ENCODE measurements at regions of chr7 and their contacts with region 1.

Region 1: DNA sequence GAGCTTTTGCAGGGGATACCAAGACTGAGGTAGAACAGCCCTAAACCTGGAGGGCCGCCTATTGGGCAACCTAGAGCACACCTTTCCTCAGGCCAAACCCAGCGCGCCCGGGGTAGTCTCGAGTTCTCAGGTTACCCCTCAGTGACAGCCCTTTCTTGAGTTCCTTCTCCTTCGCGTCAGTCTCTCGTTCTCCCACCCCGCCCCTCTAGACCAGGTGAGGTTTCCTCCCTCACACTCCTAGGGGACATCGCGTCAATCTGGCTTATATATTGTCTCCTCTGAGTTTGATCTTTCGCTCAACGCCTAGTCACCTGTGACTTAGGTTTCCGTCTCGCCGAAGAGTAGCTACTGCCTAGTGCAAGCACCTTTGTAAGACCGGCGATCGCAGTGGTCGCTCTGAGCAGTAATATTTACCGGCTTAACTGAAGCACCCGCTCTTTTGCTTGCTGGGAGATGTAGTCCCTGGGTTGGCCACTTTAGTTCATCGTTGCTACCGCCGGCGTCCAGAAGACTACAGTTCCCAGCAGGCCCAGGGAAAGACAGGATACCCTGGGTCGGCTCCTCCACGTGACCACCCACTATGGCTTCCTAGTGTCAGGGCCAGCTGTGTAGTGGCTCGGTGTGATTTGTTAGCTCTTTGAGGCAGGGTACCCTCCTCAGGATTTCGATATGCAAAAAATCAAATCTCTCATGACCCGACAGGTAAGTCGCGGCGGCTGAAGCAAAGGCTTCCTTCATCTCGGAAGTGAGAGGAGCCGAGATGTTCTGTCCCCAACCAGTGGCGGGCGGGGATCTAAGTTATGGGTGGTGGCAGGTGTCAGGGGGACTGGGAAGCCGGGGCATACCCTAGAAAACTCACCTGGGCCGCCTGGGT is at the start of gene VPS50:
- DNase-seq: peak; percentile 74
- ATAC-seq: peak; percentile 97
- H3K4me3 Mint-ChIP-seq: peak within 1 kb of the TSS; percentile 100
- H3K27ac Mint-ChIP-seq: peak within 1 kb of the TSS; percentile 98
- H3K4me1 Mint-ChIP-seq: peaks cover 22% of the 10 kb centered on the region
- H3K27me3 Mint-ChIP-seq: no peaks in the 10 kb centered on the region
- CTCF ChIP-seq: no peak
- total RNA-seq, gene VPS50: 29.2 and 43.7 TPM in 2 replicates

Region 2: DNA sequence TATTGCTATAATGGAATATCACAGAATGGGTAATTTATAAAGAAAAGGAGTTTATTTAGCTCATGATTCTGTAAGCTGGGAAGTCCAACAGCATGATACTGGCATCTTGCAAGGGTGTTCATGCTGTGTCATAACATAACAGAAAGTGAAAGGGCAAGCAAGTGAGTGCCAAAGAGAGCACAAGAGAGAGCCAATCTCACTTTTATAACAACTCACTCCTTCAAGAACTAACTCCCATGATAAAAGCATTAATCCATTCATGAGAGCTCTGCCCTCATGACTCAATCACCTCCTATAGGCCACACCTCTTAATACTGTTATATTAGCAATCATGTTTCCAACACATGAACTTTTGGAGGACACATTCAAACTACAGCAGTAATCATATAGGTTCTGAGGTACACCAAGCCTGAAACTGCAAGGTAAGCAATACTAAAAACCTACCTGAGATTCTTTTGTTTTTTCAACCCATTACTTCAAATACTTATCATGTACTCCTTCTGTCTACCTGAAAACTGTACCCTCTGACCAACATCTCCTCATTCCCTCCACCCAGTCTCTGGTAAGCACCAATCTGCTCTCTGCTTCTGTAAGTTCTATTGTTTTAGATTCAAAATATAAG is 1571.2 kb before region 1 on chr7:
- CTCF ChIA-PET with region 1: no interaction called
- POLR2A ChIA-PET with region 1: no interaction called
- intact Hi-C with region 1: no loop called
- DNase-seq: no peak
- ATAC-seq: no peak
- H3K4me3 Mint-ChIP-seq: no peak overlapping the region
- H3K27ac Mint-ChIP-seq: no peak overlapping the region
- H3K4me1 Mint-ChIP-seq: no peaks in the 10 kb centered on the region
- H3K27me3 Mint-ChIP-seq: no peaks in the 10 kb centered on the region
- CTCF ChIP-seq: no peak

Region 3: GRCh38 chr7:92134271-92135051 is 1097.6 kb before region 1 on chr7 and contains the start of gene CYP51A1:
- CTCF ChIA-PET with region 1: no interaction called
- POLR2A ChIA-PET with region 1: interaction called, 3 read pairs
- intact Hi-C with region 1: loop called (anchors 1 kb)
- DNase-seq: peak; percentile 97
- ATAC-seq: peak; percentile 83
- H3K4me3 Mint-ChIP-seq: peak within 1 kb of the TSS; percentile 99
- H3K27ac Mint-ChIP-seq: peak within 1 kb of the TSS; percentile 100
- H3K4me1 Mint-ChIP-seq: peaks cover 47% of the 10 kb centered on the region
- H3K27me3 Mint-ChIP-seq: no peaks in the 10 kb centered on the region
- CTCF ChIP-seq: no peak
- total RNA-seq, gene CYP51A1: 90.9 and 92.8 TPM in 2 replicates

Region 4: DNA sequence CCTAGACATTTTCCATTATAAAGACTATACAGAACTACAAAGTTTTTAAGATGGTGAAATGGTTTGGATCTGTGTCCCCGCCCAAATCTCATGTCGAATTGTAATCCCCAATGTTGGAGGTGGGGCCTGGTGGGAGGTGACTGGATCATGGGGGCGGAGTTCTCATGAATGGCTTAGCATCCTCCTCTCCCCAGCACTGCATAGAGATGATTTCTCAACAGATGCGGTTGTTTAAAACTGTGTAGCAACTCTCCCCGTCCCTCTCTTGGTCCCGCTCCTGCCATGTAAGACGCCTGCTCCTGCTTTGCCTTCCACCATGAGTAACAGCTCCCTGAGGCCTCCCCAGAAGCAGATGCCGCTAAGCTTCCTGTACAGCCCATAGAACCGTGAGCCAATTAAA is 643.5 kb before region 1 on chr7:
- CTCF ChIA-PET with region 1: interaction called, 3 read pairs
- POLR2A ChIA-PET with region 1: no interaction called
- intact Hi-C with region 1: loop called (anchors 1 kb)
- DNase-seq: no peak
- ATAC-seq: no peak
- H3K4me3 Mint-ChIP-seq: peak overlapping the region; percentile 80
- H3K27ac Mint-ChIP-seq: peak overlapping the region; percentile 80
- H3K4me1 Mint-ChIP-seq: peaks cover 59% of the 10 kb centered on the region
- H3K27me3 Mint-ChIP-seq: no peaks in the 10 kb centered on the region
- CTCF ChIP-seq: no peak

Region 5: GRCh38 chr7:93055543-93056107 is 176.4 kb before region 1 on chr7:
- CTCF ChIA-PET with region 1: no interaction called
- POLR2A ChIA-PET with region 1: no interaction called
- intact Hi-C with region 1: loop called (anchors 2 kb)
- DNase-seq: no peak
- ATAC-seq: peak; percentile 79
- H3K4me3 Mint-ChIP-seq: no peak overlapping the region
- H3K27ac Mint-ChIP-seq: no peak overlapping the region
- H3K4me1 Mint-ChIP-seq: peaks cover 6% of the 10 kb centered on the region
- H3K27me3 Mint-ChIP-seq: no peaks in the 10 kb centered on the region
- CTCF ChIP-seq: peak; percentile 74

Region 6: DNA sequence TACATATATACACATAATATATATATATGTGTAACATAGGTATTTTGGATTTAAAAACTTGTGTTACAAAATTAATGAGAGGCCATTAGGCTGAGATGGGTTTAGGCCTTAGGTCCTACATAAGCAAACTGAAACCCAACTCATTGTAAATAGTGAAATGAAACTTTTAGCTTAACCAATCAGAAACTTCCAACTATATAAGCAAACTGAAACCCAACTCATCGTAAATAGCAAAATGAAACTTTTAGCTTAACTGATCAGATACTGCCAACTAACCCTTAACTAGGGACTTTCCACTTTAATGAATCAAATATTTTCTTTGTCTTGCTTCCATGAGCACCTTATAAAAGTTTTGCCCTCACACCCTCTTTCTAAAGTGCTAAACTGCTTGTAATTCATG is 66.6 kb before region 1 on chr7:
- CTCF ChIA-PET with region 1: interaction called, 3 read pairs
- POLR2A ChIA-PET with region 1: no interaction called
- intact Hi-C with region 1: loop called (anchors 1 kb)
- DNase-seq: no peak
- ATAC-seq: peak; percentile 97
- H3K4me3 Mint-ChIP-seq: peak overlapping the region; percentile 47
- H3K27ac Mint-ChIP-seq: peak overlapping the region; percentile 86
- H3K4me1 Mint-ChIP-seq: peaks cover 23% of the 10 kb centered on the region
- H3K27me3 Mint-ChIP-seq: no peaks in the 10 kb centered on the region
- CTCF ChIP-seq: no peak

Region 7: GRCh38 chr7:93407233-93407632 is 175.2 kb after region 1 on chr7:
- CTCF ChIA-PET with region 1: no interaction called
- POLR2A ChIA-PET with region 1: no interaction called
- intact Hi-C with region 1: no loop called
- DNase-seq: no peak
- ATAC-seq: no peak
- H3K4me3 Mint-ChIP-seq: no peak overlapping the region
- H3K27ac Mint-ChIP-seq: no peak overlapping the region
- H3K4me1 Mint-ChIP-seq: no peaks in the 10 kb centered on the region
- H3K27me3 Mint-ChIP-seq: peaks cover 2% of the 10 kb centered on the region
- CTCF ChIP-seq: no peak

Region 8: GRCh38 chr7:93471456-93471855 is 239.4 kb after region 1 on chr7:
- CTCF ChIA-PET with region 1: no interaction called
- POLR2A ChIA-PET with region 1: no interaction called
- intact Hi-C with region 1: no loop called
- DNase-seq: no peak
- ATAC-seq: no peak
- H3K4me3 Mint-ChIP-seq: no peak overlapping the region
- H3K27ac Mint-ChIP-seq: no peak overlapping the region
- H3K4me1 Mint-ChIP-seq: no peaks in the 10 kb centered on the region
- H3K27me3 Mint-ChIP-seq: peaks cover 6% of the 10 kb centered on the region
- CTCF ChIP-seq: no peak

Region 9: GRCh38 chr7:94657771-94658693 is 1426.0 kb after region 1 on chr7:
- CTCF ChIA-PET with region 1: no interaction called
- POLR2A ChIA-PET with region 1: no interaction called
- intact Hi-C with region 1: loop called (anchors 5 kb)
- DNase-seq: peak; percentile 90
- ATAC-seq: peak; percentile 82
- H3K4me3 Mint-ChIP-seq: peak overlapping the region; percentile 89
- H3K27ac Mint-ChIP-seq: no peak overlapping the region
- H3K4me1 Mint-ChIP-seq: peaks cover 20% of the 10 kb centered on the region
- H3K27me3 Mint-ChIP-seq: no peaks in the 10 kb centered on the region
- CTCF ChIP-seq: no peak